Activated T-helper 1 cell treated with anti-CD3 and anti-CD28 coated beads, Interleukin-12 subunit alpha, Interleukin-12 subunit beta, Interleukin-2, Interleukin-4 antibody, amounts not matched to agents 30 ng/mL and 10 ng/mL and 1 ng/mL, durations not matched to agents 14 hours and 24 hours and 36 hours (primary cell): ENCODE measurements at regions of chr10 and their contacts with region 1.

Region 1: DNA sequence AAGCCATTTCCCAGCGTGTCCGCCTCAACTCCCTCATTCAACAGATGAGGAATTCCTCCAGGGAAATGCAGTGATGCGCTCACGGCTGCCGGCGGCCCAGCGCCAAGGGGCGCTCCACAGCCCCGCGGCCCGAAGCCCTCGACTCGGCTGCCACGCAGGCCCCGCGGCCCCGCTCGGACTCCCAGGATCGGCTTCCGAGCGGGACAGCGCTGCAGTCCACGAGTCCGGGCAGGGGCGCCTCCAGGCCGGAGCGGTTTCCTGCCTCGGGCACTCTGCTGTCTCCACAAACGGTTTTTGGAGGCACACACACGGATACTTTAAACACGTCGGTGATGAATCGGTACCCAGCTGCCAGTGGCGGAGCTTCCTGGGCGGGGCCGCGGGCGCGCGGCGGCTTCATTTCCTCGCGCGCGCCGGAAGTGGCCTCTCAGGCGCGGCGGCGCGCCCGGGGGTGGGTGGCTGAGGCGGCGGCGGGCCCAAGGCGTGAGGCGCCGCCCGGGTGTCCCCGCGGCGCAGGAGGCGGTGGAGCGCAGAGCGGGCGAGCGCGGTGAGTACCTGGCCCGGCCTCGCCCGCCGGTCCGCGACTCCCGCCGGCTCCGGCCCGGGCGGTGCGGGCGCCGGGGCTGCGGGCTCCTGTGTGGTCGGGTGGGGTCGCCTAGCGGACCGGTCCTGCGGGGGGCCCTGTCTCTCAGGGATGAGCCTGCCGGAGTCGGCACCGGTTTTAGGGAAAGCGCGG is at the start of gene CSGALNACT2:
- DNase-seq: peak; percentile 90
- H3K4me3 Mint-ChIP-seq: peak within 1 kb of the TSS; percentile 98
- H3K27ac Mint-ChIP-seq: peak within 1 kb of the TSS; percentile 98
- H3K4me1 Mint-ChIP-seq: peaks cover 71% of the 10 kb centered on the region
- H3K27me3 Mint-ChIP-seq: peaks cover 2% of the 10 kb centered on the region
- total RNA-seq, gene CSGALNACT2: 30.3 and 32.0 TPM in 2 replicates

Region 2: DNA sequence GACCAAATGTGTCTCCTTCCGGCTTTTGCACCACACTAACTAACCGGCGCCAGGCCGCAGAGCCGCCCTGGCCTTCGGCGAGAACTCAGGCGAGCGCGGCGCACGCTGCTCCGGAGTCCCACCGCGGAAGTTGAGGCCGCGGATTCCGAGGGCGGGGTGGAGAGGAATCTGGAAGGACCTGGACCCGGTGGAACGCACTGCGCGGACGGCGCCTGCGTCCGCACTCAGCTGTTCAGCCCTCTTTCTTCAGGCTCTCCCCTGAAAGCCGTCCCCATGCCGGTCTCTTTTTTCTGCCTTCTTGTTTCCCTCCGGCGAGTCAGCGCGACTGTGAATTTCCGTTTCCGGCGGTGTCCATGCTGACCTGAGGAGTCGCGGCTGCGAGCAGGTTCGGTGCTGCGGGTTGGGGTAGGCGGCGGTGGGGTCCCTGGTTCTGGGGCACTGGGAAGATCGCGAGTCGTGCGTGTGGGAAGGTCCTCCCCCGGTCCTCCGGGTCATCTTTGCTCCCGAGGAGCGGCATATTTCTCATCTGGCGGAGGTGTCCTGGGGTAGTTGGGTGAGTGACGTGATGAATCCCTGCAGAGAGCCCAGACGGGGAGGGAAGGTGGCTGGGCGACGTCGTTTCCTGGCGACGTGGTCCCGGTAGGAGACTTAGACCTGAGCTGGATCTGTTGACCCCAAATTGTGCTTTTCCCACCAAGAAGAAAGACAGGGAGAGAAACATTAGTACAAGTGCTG is 355.6 kb before region 1 on chr10 and contains the start of gene BMS1:
- intact Hi-C with region 1: loop called (anchors 5 kb)
- DNase-seq: peak; percentile 88
- H3K4me3 Mint-ChIP-seq: peak within 1 kb of the TSS; percentile 99
- H3K27ac Mint-ChIP-seq: peak within 1 kb of the TSS; percentile 100
- H3K4me1 Mint-ChIP-seq: peaks cover 17% of the 10 kb centered on the region
- H3K27me3 Mint-ChIP-seq: peaks cover 1% of the 10 kb centered on the region
- total RNA-seq, gene BMS1: 35.6 and 36.5 TPM in 2 replicates

Region 3: DNA sequence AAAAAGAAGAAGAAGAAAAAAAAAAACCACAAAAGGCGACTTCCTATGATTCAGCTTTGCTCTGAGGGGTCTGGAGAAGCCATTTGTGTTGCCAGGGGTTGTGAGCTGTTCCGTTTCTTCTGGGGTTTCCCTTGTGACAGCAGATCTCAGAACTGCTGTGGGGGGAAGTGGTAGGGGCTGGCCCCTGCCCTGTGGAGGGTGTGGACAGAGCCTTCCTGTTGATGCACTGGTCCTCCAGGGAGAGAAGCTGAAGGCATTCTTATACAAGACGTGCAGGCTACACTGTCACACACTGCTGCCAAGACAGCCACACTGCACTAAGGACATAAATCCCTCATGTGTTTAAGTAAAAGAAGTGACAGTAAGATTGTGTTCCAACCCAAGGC is 17.3 kb before region 1 on chr10:
- intact Hi-C with region 1: loop called (anchors 1 kb)
- DNase-seq: peak; percentile 82
- H3K4me3 Mint-ChIP-seq: peak overlapping the region; percentile 54
- H3K27ac Mint-ChIP-seq: peak overlapping the region; percentile 90
- H3K4me1 Mint-ChIP-seq: peaks cover 65% of the 10 kb centered on the region
- H3K27me3 Mint-ChIP-seq: no peaks in the 10 kb centered on the region

Region 4: GRCh38 chr10:43348511-43349312 is 210.5 kb after region 1 on chr10:
- intact Hi-C with region 1: loop called (anchors 2 kb)
- DNase-seq: peak; percentile 80
- H3K4me3 Mint-ChIP-seq: no peak overlapping the region
- H3K27ac Mint-ChIP-seq: peak overlapping the region; percentile 20
- H3K4me1 Mint-ChIP-seq: peaks cover 38% of the 10 kb centered on the region
- H3K27me3 Mint-ChIP-seq: peaks cover 16% of the 10 kb centered on the region

Region 5: DNA sequence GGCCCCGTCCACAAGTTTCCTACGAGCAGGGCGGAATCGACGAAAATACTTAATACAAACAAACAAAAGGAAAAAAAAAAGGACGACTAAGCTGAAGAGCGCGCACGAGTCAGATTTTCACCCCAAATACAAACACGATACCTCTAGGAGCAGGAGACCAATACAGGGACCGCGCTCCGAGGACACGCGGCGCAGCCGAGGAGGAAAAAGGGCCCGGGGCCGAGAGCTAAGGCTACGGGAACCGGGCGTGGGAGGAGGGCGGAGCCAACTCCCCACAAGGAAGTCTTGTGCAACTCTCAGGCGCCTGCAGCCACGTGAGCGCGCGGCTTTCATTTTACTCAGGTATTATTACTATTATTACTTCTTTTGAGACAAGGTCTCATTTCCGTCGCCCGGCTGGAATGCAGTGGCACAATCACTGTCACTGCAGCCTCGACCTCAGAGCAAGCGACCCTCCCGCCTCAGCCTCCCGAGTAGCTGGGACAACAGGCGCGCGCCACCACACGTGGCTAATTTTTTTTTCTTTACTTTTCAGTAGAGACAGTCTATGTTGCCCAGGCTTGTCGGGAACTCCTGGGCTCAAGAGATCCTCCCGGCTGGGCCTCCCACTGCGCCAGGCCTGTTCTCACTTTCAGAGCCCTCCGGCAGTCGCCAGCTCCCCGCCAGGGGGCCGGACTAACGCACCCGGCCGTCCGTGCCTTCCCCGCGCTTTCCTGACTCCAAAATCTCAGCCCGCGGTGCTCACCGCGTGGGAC is 269.6 kb after region 1 on chr10:
- intact Hi-C with region 1: loop called (anchors 2 kb)
- DNase-seq: peak; percentile 81
- H3K4me3 Mint-ChIP-seq: peak overlapping the region; percentile 99
- H3K27ac Mint-ChIP-seq: peak overlapping the region; percentile 100
- H3K4me1 Mint-ChIP-seq: peaks cover 42% of the 10 kb centered on the region
- H3K27me3 Mint-ChIP-seq: no peaks in the 10 kb centered on the region

Region 6: GRCh38 chr10:43922335-43923280 is 784.4 kb after region 1 on chr10:
- intact Hi-C with region 1: no loop called
- DNase-seq: no peak
- H3K4me3 Mint-ChIP-seq: no peak overlapping the region
- H3K27ac Mint-ChIP-seq: no peak overlapping the region
- H3K4me1 Mint-ChIP-seq: no peaks in the 10 kb centered on the region
- H3K27me3 Mint-ChIP-seq: peaks cover 1% of the 10 kb centered on the region